Activated CD8-positive, alpha-beta T cell treated with anti-CD3 and anti-CD28 coated beads for 36 hours (primary cell): ENCODE measurements at regions of chr1 and their contacts with region 1.

Region 1: DNA sequence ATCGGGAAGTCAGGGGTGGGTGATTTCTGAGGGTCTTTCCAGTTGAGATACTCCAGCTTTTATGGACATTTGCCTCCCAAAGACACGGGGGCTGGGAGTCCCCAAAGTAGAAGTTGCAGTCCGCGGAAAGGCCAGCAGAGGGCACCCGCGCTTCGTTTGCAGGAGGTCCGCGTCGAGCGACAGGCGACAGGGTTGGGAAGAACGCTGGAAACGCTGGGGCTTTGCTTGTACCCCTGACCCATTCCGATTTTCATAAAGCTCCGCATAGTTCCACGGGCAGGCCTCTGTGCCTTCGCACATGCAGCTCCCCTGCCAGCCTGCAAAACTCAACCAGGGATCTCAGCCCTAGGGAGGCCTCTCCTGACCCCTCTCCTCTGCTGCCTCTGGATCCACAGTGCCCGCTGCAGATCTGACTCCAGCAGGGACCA is 44.2 kb upstream of the LAPTM5 start:
- DNase-seq: peak; percentile 89
- ATAC-seq: peak; percentile 83
- H3K4me3 Mint-ChIP-seq: no peak overlapping the region
- H3K27ac Mint-ChIP-seq: no peak overlapping the region
- H3K4me1 Mint-ChIP-seq: peaks cover 2% of the 10 kb centered on the region
- H3K27me3 Mint-ChIP-seq: peaks cover 25% of the 10 kb centered on the region
- CTCF ChIP-seq: peak; percentile 97

Region 2: DNA sequence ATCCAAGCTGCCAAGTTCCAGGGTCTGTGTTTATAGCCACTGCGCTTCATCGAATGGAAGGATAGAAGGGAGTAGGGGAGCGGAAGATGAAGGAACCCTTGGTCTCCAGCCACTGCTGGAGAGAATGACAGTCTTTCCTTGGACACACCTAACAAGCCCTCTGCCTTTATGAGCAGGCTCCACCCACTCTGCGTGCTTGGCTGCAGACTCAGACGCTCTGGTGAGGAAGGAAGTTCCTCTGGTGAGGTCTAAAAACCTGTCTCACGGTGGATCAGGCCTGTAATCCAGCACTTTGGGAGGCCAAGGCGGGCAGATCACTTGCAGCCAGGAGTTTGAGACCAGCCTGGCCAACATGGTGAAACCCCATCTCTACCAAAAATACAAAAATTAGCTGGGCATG is 133.8 kb before region 1 on chr1:
- CTCF ChIA-PET with region 1: no interaction called
- POLR2A ChIA-PET with region 1: no interaction called
- intact Hi-C with region 1: no loop called
- DNase-seq: peak; percentile 5
- ATAC-seq: no peak
- H3K4me3 Mint-ChIP-seq: no peak overlapping the region
- H3K27ac Mint-ChIP-seq: no peak overlapping the region
- H3K4me1 Mint-ChIP-seq: no peaks in the 10 kb centered on the region
- H3K27me3 Mint-ChIP-seq: peaks cover 6% of the 10 kb centered on the region
- CTCF ChIP-seq: no peak

Region 3: DNA sequence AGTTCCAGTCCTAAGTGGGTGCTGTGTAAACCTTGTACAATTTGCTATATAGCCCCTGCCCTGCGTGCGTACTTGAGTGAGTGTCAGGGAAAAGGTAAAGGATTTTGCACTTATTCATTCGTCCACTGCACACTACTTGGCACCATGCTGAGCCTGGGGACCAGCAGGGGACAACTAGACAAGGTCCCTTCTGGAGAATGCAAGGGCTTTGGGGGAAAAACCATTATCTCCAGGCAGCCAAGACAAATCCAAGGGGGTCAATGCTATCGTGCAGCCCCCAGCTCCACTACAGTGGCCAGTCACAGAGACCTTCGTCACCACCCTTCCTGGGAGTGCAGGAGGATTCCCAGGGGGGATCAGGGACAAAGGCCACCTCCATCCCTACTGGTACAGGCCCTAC is 118.1 kb before region 1 on chr1:
- CTCF ChIA-PET with region 1: no interaction called
- POLR2A ChIA-PET with region 1: no interaction called
- intact Hi-C with region 1: no loop called
- DNase-seq: no peak
- ATAC-seq: no peak
- H3K4me3 Mint-ChIP-seq: no peak overlapping the region
- H3K27ac Mint-ChIP-seq: no peak overlapping the region
- H3K4me1 Mint-ChIP-seq: peaks cover 2% of the 10 kb centered on the region
- H3K27me3 Mint-ChIP-seq: peaks cover 32% of the 10 kb centered on the region
- CTCF ChIP-seq: no peak

Region 4: GRCh38 chr1:30707412-30708360 is 94.1 kb before region 1 on chr1:
- CTCF ChIA-PET with region 1: no interaction called
- POLR2A ChIA-PET with region 1: no interaction called
- intact Hi-C with region 1: no loop called
- DNase-seq: peak; percentile 71
- ATAC-seq: peak; percentile 95
- H3K4me3 Mint-ChIP-seq: no peak overlapping the region
- H3K27ac Mint-ChIP-seq: no peak overlapping the region
- H3K4me1 Mint-ChIP-seq: no peaks in the 10 kb centered on the region
- H3K27me3 Mint-ChIP-seq: peaks cover 1% of the 10 kb centered on the region
- CTCF ChIP-seq: peak; percentile 78

Region 5: DNA sequence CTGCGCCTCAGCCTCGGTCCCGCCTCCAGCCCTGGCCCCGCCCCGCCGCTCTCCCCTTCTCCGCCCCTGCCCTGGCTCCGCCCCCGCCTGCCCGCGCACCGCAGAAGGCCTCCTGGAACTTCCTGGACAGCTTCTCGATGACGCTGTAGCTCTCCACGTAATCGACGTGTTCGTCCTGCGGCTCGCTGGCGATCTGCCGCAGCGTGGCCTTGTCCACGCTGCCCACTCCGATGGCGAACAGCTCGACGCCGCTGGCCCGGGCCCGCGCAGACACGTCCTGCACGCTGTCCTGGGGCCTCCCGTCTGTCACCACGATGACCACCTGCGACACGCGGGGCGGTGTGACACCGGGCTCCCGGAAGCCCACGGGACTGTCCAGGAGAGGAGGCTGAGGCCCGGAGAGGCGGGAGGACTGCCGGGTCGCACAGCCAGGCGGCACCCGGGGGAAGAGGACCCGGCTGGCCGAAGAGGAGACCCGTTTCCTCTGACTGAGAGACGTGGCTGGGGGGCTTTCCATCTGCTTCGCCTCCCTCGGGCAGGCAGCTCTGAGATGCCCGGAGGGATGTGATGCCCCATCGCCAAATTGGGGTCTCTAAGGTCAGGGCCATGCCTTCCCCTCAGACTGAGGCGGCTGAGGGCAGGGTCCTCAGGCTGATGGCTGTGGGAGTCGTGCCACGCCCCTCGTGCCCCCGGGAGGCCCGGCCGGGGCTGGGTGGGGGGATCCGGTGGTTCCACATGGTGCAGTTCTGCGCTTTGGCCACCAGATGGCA is 83.0 kb before region 1 on chr1:
- CTCF ChIA-PET with region 1: interaction called, 25 read pairs
- POLR2A ChIA-PET with region 1: no interaction called
- intact Hi-C with region 1: no loop called
- DNase-seq: peak; percentile 100
- ATAC-seq: peak; percentile 70
- H3K4me3 Mint-ChIP-seq: peak overlapping the region; percentile 88
- H3K27ac Mint-ChIP-seq: peak overlapping the region; percentile 93
- H3K4me1 Mint-ChIP-seq: peaks cover 29% of the 10 kb centered on the region
- H3K27me3 Mint-ChIP-seq: no peaks in the 10 kb centered on the region
- CTCF ChIP-seq: no peak

Region 6: GRCh38 chr1:30779294-30780071 is 22.3 kb before region 1 on chr1:
- CTCF ChIA-PET with region 1: interaction called, 80 read pairs
- POLR2A ChIA-PET with region 1: no interaction called
- intact Hi-C with region 1: no loop called
- DNase-seq: peak; percentile 97
- ATAC-seq: peak; percentile 89
- H3K4me3 Mint-ChIP-seq: no peak overlapping the region
- H3K27ac Mint-ChIP-seq: no peak overlapping the region
- H3K4me1 Mint-ChIP-seq: peaks cover 16% of the 10 kb centered on the region
- H3K27me3 Mint-ChIP-seq: no peaks in the 10 kb centered on the region
- CTCF ChIP-seq: peak; percentile 92

Region 7: GRCh38 chr1:30816211-30817076 is 14.7 kb after region 1 on chr1:
- CTCF ChIA-PET with region 1: interaction called, 40 read pairs
- POLR2A ChIA-PET with region 1: interaction called, 3 read pairs
- intact Hi-C with region 1: no loop called
- DNase-seq: no peak
- ATAC-seq: no peak
- H3K4me3 Mint-ChIP-seq: no peak overlapping the region
- H3K27ac Mint-ChIP-seq: no peak overlapping the region
- H3K4me1 Mint-ChIP-seq: no peaks in the 10 kb centered on the region
- H3K27me3 Mint-ChIP-seq: peaks cover 38% of the 10 kb centered on the region
- CTCF ChIP-seq: no peak

Region 8: GRCh38 chr1:30834253-30834652 is 32.5 kb after region 1 on chr1:
- CTCF ChIA-PET with region 1: interaction called, 20 read pairs
- POLR2A ChIA-PET with region 1: no interaction called
- intact Hi-C with region 1: no loop called
- DNase-seq: no peak
- ATAC-seq: no peak
- H3K4me3 Mint-ChIP-seq: no peak overlapping the region
- H3K27ac Mint-ChIP-seq: no peak overlapping the region
- H3K4me1 Mint-ChIP-seq: no peaks in the 10 kb centered on the region
- H3K27me3 Mint-ChIP-seq: peaks cover 20% of the 10 kb centered on the region
- CTCF ChIP-seq: no peak

Region 9: GRCh38 chr1:30911046-30911954 is 109.5 kb after region 1 on chr1:
- CTCF ChIA-PET with region 1: interaction called, 216 read pairs
- POLR2A ChIA-PET with region 1: interaction called, 3 read pairs
- intact Hi-C with region 1: loop called (anchors 1 kb)
- DNase-seq: peak; percentile 80
- ATAC-seq: peak; percentile 64
- H3K4me3 Mint-ChIP-seq: no peak overlapping the region
- H3K27ac Mint-ChIP-seq: no peak overlapping the region
- H3K4me1 Mint-ChIP-seq: peaks cover 9% of the 10 kb centered on the region
- H3K27me3 Mint-ChIP-seq: peaks cover 32% of the 10 kb centered on the region
- CTCF ChIP-seq: peak; percentile 74

Region 10: GRCh38 chr1:30929135-30929889 is 127.5 kb after region 1 on chr1:
- CTCF ChIA-PET with region 1: interaction called, 82 read pairs
- POLR2A ChIA-PET with region 1: interaction called, 5 read pairs
- intact Hi-C with region 1: no loop called
- DNase-seq: peak; percentile 70
- ATAC-seq: peak; percentile 88
- H3K4me3 Mint-ChIP-seq: no peak overlapping the region
- H3K27ac Mint-ChIP-seq: no peak overlapping the region
- H3K4me1 Mint-ChIP-seq: peaks cover 5% of the 10 kb centered on the region
- H3K27me3 Mint-ChIP-seq: no peaks in the 10 kb centered on the region
- CTCF ChIP-seq: peak; percentile 82